ENCODE measurements at regions of chr6 and their contacts with region 1.

Region 1: DNA sequence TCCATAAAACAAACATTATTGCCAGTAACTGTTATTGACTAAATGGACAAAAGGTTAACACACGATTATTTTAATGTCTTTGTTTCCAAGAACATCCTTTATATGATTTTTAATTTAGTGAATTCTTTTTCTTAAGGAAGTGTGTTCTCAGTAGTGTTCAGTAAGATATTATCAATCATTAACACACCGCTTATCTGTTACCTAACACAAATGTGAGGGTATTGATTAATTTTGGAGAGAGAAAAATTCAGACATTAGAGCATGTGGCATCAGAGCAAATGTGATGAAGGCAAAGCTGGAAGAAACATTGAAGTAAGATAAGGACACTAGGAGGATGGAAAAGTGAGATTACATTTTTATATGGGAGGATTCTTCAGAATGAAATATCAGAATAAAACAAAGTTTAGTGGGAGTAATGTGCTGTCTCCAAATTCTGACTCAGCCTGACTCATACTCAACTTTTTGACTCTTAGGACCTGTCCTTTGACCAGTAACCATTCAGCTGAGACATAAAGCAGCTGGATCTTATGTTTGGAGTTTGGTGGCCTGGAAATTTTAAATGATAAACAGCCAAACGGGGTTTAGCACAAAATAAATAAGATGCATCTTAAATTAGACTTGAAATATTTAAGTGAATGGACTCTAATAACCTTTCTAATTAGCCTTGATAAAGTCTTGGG is 348.6 kb downstream of the CD109 start:
- DNase-seq: no peak
- ATAC-seq: no peak
- H3K4me3 Mint-ChIP-seq: no peak overlapping the region
- H3K27ac Mint-ChIP-seq: no peak overlapping the region
- H3K4me1 Mint-ChIP-seq: peaks cover 14% of the 10 kb centered on the region
- H3K27me3 Mint-ChIP-seq: no peaks in the 10 kb centered on the region
- CTCF ChIP-seq: no peak

Region 2: DNA sequence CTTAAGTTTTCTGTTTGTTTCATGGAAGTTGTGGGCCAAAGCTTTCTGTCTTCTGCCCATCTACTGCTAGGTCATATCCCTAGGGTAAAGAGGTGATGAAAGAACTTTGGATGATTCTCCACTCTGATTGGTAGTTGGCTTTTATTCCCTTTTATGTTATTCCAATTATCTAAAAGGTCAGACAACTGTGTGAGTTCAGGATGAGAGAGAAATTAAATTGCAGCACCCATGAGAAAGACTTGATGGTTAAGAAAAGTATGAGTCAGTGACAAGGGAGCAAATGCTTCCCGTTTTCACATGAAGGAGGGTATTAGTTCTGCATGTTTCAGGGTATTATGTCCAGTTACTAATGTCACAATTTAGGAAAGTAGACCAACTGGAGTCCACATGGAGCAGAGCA is 212.2 kb before region 1 on chr6:
- CTCF ChIA-PET with region 1: no interaction called
- POLR2A ChIA-PET with region 1: interaction called, 10 read pairs
- DNase-seq: no peak
- ATAC-seq: no peak
- H3K4me3 Mint-ChIP-seq: no peak overlapping the region
- H3K27ac Mint-ChIP-seq: no peak overlapping the region
- H3K4me1 Mint-ChIP-seq: no peaks in the 10 kb centered on the region
- H3K27me3 Mint-ChIP-seq: no peaks in the 10 kb centered on the region
- CTCF ChIP-seq: no peak

Region 3: DNA sequence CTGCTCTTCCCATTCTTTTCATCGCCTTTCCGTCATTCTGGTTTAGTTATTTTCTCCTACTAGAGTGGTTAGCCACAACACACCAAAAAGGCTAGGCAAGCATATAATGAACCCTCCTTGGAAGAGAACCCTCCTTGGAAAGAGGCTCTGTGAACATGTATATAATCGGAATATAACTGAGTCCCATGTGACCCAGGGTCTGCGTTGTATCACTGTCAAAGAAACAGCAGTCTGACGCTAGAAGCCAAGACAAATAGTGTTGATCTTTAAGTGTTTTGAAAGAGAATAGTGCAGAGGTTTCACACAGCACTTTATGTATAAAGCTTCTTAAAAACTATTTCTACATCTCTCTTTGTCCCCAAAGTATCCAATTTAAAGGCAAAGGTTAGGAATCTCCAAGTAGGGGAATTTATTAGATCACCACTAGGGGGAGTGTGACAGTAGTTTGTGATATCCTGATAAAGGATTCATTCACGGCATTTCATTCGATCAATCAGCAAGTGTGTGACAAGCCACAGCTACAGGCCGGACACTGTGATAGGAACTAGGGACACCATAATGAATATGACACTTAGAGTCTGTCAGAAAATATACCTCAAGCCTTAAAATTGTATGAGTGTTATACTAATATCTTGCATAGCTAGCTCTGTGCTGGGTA is 46.7 kb after region 1 on chr6:
- CTCF ChIA-PET with region 1: no interaction called
- POLR2A ChIA-PET with region 1: no interaction called
- DNase-seq: no peak
- ATAC-seq: peak; percentile 74
- H3K4me3 Mint-ChIP-seq: no peak overlapping the region
- H3K27ac Mint-ChIP-seq: no peak overlapping the region
- H3K4me1 Mint-ChIP-seq: no peaks in the 10 kb centered on the region
- H3K27me3 Mint-ChIP-seq: no peaks in the 10 kb centered on the region
- CTCF ChIP-seq: peak; percentile 75

Region 4: GRCh38 chr6:74114428-74114827 is 69.9 kb after region 1 on chr6:
- CTCF ChIA-PET with region 1: no interaction called
- POLR2A ChIA-PET with region 1: no interaction called
- DNase-seq: no peak
- ATAC-seq: no peak
- H3K4me3 Mint-ChIP-seq: no peak overlapping the region
- H3K27ac Mint-ChIP-seq: no peak overlapping the region
- H3K4me1 Mint-ChIP-seq: no peaks in the 10 kb centered on the region
- H3K27me3 Mint-ChIP-seq: no peaks in the 10 kb centered on the region; the same call in 1 of the 2 replicates
- CTCF ChIP-seq: no peak

Region 5: DNA sequence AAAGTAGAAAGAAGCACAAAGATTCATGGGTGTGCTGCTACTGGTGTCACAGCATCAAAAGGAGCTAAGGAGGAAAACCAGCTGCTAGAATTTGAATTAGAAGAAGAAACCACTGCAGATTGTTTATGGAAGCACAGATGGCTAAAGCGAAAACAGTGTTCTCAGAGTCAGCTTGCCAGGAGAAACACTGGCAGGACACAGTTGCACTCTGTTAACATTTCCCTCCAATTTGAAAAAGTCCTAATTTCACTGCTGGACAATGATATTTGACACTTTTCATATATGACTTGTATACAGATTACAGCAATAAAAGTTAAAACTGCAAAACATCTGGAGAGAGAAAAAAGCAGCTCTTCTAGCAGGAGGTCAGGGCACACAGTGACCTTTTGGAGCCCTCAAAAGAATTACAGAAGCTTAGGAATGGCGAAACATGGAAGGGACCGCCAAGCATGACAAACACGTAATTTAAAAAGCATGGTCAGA is 846.8 kb after region 1 on chr6:
- CTCF ChIA-PET with region 1: no interaction called
- POLR2A ChIA-PET with region 1: no interaction called
- DNase-seq: no peak
- ATAC-seq: no peak
- H3K4me3 Mint-ChIP-seq: no peak overlapping the region
- H3K27ac Mint-ChIP-seq: no peak overlapping the region
- H3K4me1 Mint-ChIP-seq: no peaks in the 10 kb centered on the region
- H3K27me3 Mint-ChIP-seq: no peaks in the 10 kb centered on the region; the same call in 1 of the 2 replicates
- CTCF ChIP-seq: no peak